ENCODE measurements at regions of chr11 and their contacts with region 1.

Region 1: DNA sequence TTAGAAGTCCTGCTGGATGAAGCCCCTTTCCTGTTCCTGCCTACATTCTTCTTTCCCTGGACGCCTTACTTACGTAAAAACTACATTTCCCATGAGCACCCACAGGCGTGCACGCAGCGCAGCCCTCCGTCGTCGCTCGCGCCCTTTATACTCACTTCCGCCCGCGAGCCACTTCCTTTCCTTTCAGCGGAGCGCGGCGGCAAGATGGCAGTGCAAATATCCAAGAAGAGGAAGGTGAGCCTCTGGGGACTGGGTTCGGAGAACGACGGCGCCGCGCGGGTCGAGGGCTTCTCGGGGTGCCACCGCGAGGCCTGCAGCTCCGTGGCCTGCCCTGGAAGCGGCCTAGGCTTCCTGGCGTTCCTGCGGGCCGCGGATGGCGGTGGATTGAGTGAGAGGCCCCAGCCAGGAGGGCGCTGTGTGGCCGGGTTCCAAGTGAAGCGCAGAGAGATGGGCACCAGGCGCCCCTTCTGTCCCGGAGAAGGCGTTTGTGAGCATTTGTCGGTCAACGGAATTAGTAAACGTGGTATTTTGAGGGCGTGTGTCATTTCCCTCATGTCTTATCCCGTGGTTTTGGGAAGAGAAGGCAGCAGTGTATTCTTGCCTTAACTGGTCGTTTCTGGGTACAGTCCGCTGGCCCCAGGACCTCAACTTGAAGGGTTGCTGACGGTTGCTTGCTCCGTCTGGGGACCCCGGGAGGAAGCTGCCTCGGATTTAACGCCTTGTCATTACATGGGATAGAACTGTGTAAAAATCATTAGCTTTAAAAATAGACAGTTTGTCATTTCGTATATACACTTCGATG is at the start of gene RPS3:
- DNase-seq: peak; percentile 81 to 91 (median 88)
- ATAC-seq: peak; percentile 96
- H3K4me3 ChIP-seq: peak within 1 kb of the TSS; percentile 80
- H3K4me3 Mint-ChIP-seq: peak within 1 kb of the TSS; percentile 87 to 99 (median 94)
- H3K27ac ChIP-seq: peak within 1 kb of the TSS; percentile 86
- H3K27ac Mint-ChIP-seq: peak within 1 kb of the TSS; percentile 94 to 99 (median 96)
- H3K4me1 ChIP-seq: peaks cover 16 to 17% of the 10 kb centered on the region in 2 donors
- H3K4me1 Mint-ChIP-seq: peaks cover 20 to 54% (median 48%) of the 10 kb centered on the region in 7 donors
- H3K27me3 ChIP-seq: no peaks in the 10 kb centered on the region
- H3K27me3 Mint-ChIP-seq: peaks cover 0 to 11% (median 0%) of the 10 kb centered on the region in 5 donors
- total RNA-seq, gene RPS3: 3,135 to 5,501 (median 5,089) TPM

Region 2: DNA sequence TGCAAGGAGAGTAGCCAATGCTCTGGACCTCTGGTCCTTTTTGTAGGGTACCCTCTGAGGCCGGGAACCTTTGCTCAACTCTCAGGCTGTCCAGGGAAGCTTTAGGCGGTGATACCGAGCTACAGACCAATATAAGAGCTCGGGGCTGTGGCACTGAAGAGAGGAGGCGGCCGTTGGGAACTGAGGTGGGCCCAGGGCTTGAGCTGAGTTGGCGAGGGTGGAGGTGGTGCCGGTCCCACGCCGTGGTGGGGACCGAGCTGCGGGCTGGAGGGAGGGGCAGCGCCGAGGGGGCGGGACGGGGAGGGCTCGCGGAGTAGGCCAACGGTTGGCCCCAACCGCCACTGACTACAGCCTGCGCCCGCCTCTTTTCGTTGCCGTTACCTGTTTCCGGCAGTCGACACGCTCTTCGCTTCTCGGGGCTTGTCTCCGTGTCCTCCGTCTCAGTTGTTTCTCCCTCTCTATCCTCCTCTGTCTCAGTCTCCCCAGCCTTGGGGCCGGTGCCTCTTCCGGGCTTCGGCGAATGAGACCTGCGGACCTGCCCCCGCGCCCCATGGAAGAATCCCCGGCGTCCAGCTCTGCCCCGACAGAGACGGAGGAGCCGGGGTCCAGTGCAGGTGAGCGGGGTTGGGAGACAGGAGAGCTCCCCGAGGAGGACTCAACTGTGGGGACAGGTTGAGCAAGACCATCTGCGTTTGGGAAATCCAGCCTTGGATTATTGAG is 410.8 kb before region 1 on chr11 and contains the start of gene NEU3:
- CTCF ChIA-PET with region 1: no interaction called
- POLR2A ChIA-PET with region 1: no interaction called
- intact Hi-C with region 1: loop called in 1 of 2 experiments (anchors 1 kb)
- DNase-seq: peak; percentile 64 to 82 (median 78)
- ATAC-seq: peak; percentile 97
- H3K4me3 ChIP-seq: peak within 1 kb of the TSS; percentile 96
- H3K4me3 Mint-ChIP-seq: peak within 1 kb of the TSS; percentile 88 to 97 (median 93)
- H3K27ac ChIP-seq: peak within 1 kb of the TSS; percentile 81
- H3K27ac Mint-ChIP-seq: peak within 1 kb of the TSS; percentile 75 to 94 (median 89)
- H3K4me1 ChIP-seq: peaks cover 8 to 16% of the 10 kb centered on the region in 2 donors
- H3K4me1 Mint-ChIP-seq: peaks cover 16 to 37% (median 31%) of the 10 kb centered on the region in 7 donors
- H3K27me3 ChIP-seq: no peaks in the 10 kb centered on the region
- H3K27me3 Mint-ChIP-seq: no peaks in the 10 kb centered on the region
- total RNA-seq, gene NEU3: 12.6 to 18.9 (median 16.1) TPM

Region 3: DNA sequence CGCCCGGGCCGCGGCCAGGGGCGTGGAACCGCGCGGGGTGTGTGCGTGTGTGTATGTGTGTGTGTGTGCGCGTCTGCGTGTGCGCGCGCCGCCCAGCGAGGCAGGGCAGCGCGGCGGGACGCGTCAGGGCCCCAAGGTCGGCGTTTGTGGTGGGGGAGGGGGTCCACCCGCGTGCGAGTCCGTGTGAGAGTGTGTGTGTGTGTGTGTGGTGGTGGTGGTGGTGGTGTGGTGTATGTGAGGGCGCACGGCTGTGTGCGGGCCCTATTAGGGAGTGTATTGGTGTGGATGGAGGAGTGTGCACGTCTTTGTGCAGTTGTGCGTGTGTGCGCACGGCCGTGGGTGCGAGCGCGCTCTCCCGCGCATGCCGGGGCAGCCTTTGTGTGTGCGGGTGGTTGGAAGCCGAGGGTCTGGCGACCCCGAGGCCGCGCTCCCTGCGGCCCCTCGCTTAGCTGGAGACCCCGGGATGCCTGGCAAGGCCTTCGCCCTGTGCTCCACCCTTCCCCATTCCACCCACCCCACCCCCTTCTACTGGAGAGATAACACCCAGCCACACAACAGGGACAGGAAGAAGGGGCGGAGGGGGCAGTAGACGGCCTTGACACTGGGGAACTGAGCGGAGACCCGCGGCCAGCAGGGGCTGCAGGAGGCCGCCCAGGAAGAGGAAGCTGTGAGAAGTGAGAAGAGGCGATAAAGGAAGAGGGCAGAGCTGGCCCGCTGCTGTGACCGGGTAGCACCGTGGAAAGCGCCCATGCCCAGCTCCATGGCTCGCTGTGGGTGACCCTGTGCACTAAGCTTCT is 47.6 kb before region 1 on chr11:
- CTCF ChIA-PET with region 1: no interaction called
- POLR2A ChIA-PET with region 1: interaction called, 6 read pairs
- intact Hi-C with region 1: loop called in 1 of 2 experiments (anchors 1 kb)
- DNase-seq: peak; percentile 49 to 75 (median 70)
- ATAC-seq: peak; percentile 80
- H3K4me3 ChIP-seq: peak overlapping the region; percentile 87
- H3K4me3 Mint-ChIP-seq: peak overlapping the region; percentile 84 to 96 (median 94)
- H3K27ac ChIP-seq: peak overlapping the region; percentile 74
- H3K27ac Mint-ChIP-seq: peak overlapping the region; percentile 80 to 96 (median 92)
- H3K4me1 ChIP-seq: peaks cover 9 to 53% of the 10 kb centered on the region in 2 donors
- H3K4me1 Mint-ChIP-seq: peaks cover 64 to 82% (median 72%) of the 10 kb centered on the region in 7 donors
- H3K27me3 ChIP-seq: no peaks in the 10 kb centered on the region
- H3K27me3 Mint-ChIP-seq: peaks cover 0 to 3% (median 0%) of the 10 kb centered on the region in 5 donors

Region 4: GRCh38 chr11:75429902-75430719 is 30.6 kb after region 1 on chr11:
- CTCF ChIA-PET with region 1: interaction called, 3 read pairs
- POLR2A ChIA-PET with region 1: interaction called, 3 read pairs
- intact Hi-C with region 1: loop called (anchors 1 kb)
- DNase-seq: peak; percentile 53 to 72 (median 68)
- ATAC-seq: peak; percentile 79
- H3K4me3 ChIP-seq: peak overlapping the region; percentile 54
- H3K4me3 Mint-ChIP-seq: peak overlapping the region; percentile 77 to 94 (median 88)
- H3K27ac ChIP-seq: no peak overlapping the region
- H3K27ac Mint-ChIP-seq: peak overlapping the region in 8 of 9 donors; percentile 55 to 90 (median 71)
- H3K4me1 ChIP-seq: peaks cover 10 to 12% of the 10 kb centered on the region in 2 donors
- H3K4me1 Mint-ChIP-seq: peaks cover 17 to 31% (median 22%) of the 10 kb centered on the region in 7 donors
- H3K27me3 ChIP-seq: peaks cover 4 to 5% of the 10 kb centered on the region in 2 donors
- H3K27me3 Mint-ChIP-seq: peaks cover 34 to 56% (median 45%) of the 10 kb centered on the region in 5 donors

Region 5: DNA sequence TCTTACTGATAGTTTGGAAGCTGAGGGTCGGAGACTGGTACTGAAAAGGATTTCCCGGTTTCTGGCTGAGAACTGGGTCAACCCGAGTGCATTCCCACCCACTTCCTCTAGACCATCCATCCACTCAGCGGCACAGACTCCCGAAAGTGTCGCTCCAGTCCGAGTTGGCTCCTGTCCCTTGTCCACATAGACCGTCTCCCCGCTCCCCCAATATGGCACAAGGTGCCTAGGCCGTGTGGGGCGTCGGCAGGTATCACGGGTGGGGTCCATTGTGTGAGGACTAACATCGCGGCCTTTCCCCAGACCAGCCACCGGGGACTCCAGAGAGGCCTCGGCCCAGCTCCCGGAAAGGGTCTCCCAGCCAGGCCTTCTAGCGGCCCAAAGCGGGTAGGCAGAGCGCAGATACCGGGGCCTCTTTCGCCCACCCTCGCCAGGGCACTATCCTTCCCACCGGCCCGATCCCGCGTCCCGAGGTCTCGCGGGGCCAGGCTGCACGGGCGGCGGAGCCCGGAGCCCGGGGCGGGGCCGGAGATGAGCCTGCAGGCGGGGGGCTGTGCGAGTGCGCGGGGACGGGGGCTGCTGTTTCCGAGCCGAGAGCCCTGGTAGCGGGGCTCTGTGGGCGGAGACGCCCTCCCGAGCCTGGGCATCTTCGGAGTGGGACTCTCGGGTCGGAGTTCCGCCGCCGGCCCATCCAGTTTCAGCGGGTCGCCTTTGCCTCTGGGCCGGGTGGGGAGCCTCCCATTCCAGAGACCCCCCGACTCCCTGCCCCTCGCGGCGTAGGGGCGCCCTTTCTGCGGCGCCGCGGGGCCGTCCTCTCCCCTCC is 183.6 kb after region 1 on chr11:
- CTCF ChIA-PET with region 1: no interaction called
- POLR2A ChIA-PET with region 1: no interaction called
- intact Hi-C with region 1: loop called in 1 of 2 experiments (anchors 1 kb)
- DNase-seq: peak; percentile 10 to 60 (median 40)
- ATAC-seq: peak; percentile 87
- H3K4me3 ChIP-seq: peak overlapping the region; percentile 72
- H3K4me3 Mint-ChIP-seq: peak overlapping the region; percentile 42 to 95 (median 82)
- H3K27ac ChIP-seq: peak overlapping the region; percentile 59
- H3K27ac Mint-ChIP-seq: peak overlapping the region in 6 of 9 donors; percentile 77 to 92 (median 86)
- H3K4me1 ChIP-seq: peaks cover 9 to 10% of the 10 kb centered on the region in 2 donors
- H3K4me1 Mint-ChIP-seq: peaks cover 10 to 24% (median 16%) of the 10 kb centered on the region in 7 donors
- H3K27me3 ChIP-seq: no peaks in the 10 kb centered on the region
- H3K27me3 Mint-ChIP-seq: peaks cover 0 to 45% (median 21%) of the 10 kb centered on the region in 5 donors